GM12878 (cell line): ENCODE measurements at regions of chr4 and their contacts with region 1.

Region 1: DNA sequence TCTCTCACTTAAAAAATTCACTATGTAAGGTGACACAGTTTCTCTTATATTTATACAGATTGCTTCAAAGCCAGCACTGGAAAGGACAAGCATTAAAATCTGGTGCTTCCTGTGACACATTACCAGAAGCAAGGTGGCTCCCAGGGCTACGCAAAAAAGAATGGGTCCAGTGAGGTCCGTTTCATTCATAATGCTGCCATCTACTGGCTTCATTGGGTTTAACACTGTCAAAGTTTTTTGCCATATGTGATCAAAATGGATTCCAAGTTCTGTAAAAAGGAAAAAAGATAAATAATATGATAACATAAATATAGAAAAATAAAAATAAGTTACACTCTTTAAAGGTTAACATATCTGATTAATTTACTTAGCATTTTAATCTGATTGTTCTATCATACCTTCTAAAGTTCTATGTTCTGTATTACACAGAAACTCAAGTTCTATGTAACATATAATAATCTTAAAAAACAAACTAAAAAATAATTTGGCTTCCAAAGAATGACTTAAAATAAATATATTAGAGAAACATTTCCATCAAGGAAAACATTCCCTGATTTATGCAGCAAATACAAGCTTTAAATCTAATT is 22.1 kb downstream of the YIPF7 start:
- DNase-seq: peak; percentile 12
- ATAC-seq: peak; percentile 96
- H3K4me3 ChIP-seq: no peak overlapping the region
- H3K27ac ChIP-seq: no peak overlapping the region
- H3K4me1 ChIP-seq: no peaks in the 10 kb centered on the region
- H3K27me3 ChIP-seq: no peaks in the 10 kb centered on the region
- CTCF ChIP-seq: peak; percentile 56 to 75 (median 67); a peak in 5 of 6 replicates
- EP300 ChIP-seq: no peak
- POLR2A ChIP-seq: no peak
- RAD21 ChIP-seq: peak; percentile 73

Region 2: GRCh38 chr4:42995343-42995944 is 1633.9 kb before region 1 on chr4:
- CTCF ChIA-PET with region 1: interaction called, 4 read pairs
- POLR2A ChIA-PET with region 1: no interaction called
- RAD21 ChIA-PET with region 1: no interaction called
- SMC1A ChIA-PET with region 1: no interaction called
- in situ Hi-C with region 1: no loop called
- intact Hi-C with region 1: loop called (anchors 1 kb)
- DNase-seq: no peak
- ATAC-seq: peak; percentile 84
- H3K4me3 ChIP-seq: no peak overlapping the region
- H3K27ac ChIP-seq: no peak overlapping the region
- H3K4me1 ChIP-seq: no peaks in the 10 kb centered on the region
- H3K27me3 ChIP-seq: no peaks in the 10 kb centered on the region
- CTCF ChIP-seq: peak; percentile 68 to 73 (median 69)
- EP300 ChIP-seq: no peak
- POLR2A ChIP-seq: no peak
- RAD21 ChIP-seq: peak; percentile 81

Region 3: DNA sequence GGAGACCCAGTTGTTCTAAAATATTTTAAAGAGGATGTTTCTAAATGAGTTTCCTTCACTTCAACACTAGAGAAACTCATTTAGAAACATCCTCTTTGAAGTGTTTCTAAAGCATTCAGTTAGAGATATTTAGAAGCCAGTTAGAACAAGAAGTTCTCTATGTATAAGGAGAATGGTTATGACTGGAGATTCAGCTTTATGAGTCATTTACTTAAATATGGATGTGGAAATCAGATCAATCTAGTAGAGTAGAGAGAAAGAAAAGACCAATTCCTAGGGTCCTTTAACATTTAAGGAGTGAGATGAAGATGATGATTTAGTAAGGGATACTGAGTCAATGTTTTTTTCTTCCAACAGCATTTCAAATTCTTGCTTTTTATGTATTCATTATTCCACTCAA is 1502.8 kb before region 1 on chr4:
- CTCF ChIA-PET with region 1: interaction called, 5 read pairs
- POLR2A ChIA-PET with region 1: no interaction called
- RAD21 ChIA-PET with region 1: interaction called, 3 read pairs
- SMC1A ChIA-PET with region 1: interaction called, 3 read pairs
- in situ Hi-C with region 1: loop called (anchors 10 kb)
- intact Hi-C with region 1: loop called (anchors 5 kb)
- DNase-seq: no peak
- ATAC-seq: no peak
- H3K4me3 ChIP-seq: no peak overlapping the region
- H3K27ac ChIP-seq: no peak overlapping the region
- H3K4me1 ChIP-seq: no peaks in the 10 kb centered on the region
- H3K27me3 ChIP-seq: no peaks in the 10 kb centered on the region
- CTCF ChIP-seq: no peak
- EP300 ChIP-seq: no peak
- POLR2A ChIP-seq: no peak
- RAD21 ChIP-seq: no peak

Region 4: DNA sequence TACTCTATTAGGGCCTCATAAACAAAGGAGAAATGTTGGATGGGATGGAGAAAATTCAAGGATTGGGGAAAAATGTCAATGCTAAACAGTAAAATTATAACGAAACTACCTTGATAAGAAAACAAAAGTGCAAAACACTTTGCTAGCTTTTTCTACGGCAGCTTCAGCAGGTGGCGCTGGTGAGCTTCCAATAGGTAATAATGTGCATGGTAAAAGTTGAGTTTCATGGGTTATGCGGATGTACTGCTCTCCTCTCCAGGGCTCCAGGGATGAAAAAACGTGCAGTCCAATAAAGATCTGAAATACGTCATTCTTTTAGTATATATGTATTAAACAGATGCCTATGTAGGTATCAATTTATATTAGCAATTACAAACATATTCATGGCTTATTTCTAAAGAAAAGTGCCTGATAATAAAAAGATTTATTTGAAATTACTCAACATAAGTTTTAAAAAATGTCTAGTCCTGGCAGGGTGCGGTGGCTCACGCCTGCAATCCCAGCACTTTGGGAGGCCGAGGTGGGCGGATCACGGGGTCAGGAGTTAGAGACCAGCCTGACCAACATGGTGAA is 1497.3 kb before region 1 on chr4:
- CTCF ChIA-PET with region 1: interaction called, 5 read pairs
- POLR2A ChIA-PET with region 1: no interaction called
- RAD21 ChIA-PET with region 1: interaction called, 3 read pairs
- SMC1A ChIA-PET with region 1: interaction called, 3 read pairs
- in situ Hi-C with region 1: loop called (anchors 10 kb)
- intact Hi-C with region 1: loop called (anchors 5 kb)
- DNase-seq: peak; percentile 3
- ATAC-seq: peak; percentile 75
- H3K4me3 ChIP-seq: no peak overlapping the region
- H3K27ac ChIP-seq: no peak overlapping the region
- H3K4me1 ChIP-seq: no peaks in the 10 kb centered on the region
- H3K27me3 ChIP-seq: no peaks in the 10 kb centered on the region
- CTCF ChIP-seq: peak; percentile 80 to 93 (median 81); a peak in 5 of 6 replicates
- EP300 ChIP-seq: no peak
- POLR2A ChIP-seq: no peak
- RAD21 ChIP-seq: peak; percentile 90

Region 5: DNA sequence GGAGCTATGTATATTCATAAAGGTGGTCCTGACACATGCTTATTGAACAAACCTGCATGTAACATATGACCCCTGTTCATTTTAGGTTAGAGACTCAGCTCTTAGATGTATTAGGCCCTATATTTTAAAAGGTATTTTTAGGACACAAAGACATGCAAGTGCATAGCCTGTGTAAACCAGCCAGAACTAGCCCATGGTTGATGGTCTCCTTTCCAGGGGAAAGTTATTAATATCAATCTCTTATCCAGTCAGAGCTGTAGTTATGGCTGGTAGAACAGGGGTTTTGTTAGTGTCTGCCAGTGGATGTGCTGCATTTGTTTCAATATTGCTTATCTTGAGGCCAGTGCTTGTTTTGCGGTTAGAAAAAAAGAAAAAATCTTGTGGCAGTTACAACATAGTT is 669.4 kb before region 1 on chr4:
- CTCF ChIA-PET with region 1: no interaction called
- POLR2A ChIA-PET with region 1: no interaction called
- RAD21 ChIA-PET with region 1: no interaction called
- SMC1A ChIA-PET with region 1: no interaction called
- in situ Hi-C with region 1: no loop called
- intact Hi-C with region 1: no loop called
- DNase-seq: no peak
- ATAC-seq: no peak
- H3K4me3 ChIP-seq: no peak overlapping the region
- H3K27ac ChIP-seq: no peak overlapping the region
- H3K4me1 ChIP-seq: no peaks in the 10 kb centered on the region
- H3K27me3 ChIP-seq: no peaks in the 10 kb centered on the region
- CTCF ChIP-seq: no peak
- EP300 ChIP-seq: no peak
- POLR2A ChIP-seq: no peak
- RAD21 ChIP-seq: no peak

Region 6: GRCh38 chr4:44448548-44449461 is 180.6 kb before region 1 on chr4 and contains the start of gene KCTD8:
- CTCF ChIA-PET with region 1: interaction called, 3 read pairs
- POLR2A ChIA-PET with region 1: no interaction called
- RAD21 ChIA-PET with region 1: no interaction called
- SMC1A ChIA-PET with region 1: no interaction called
- in situ Hi-C with region 1: no loop called
- intact Hi-C with region 1: loop called (anchors 2 kb)
- DNase-seq: peak; percentile 1
- ATAC-seq: peak; percentile 99
- H3K4me3 ChIP-seq: peak within 1 kb of the TSS; percentile 38; the same call in 1 of the 2 replicates
- H3K27ac ChIP-seq: no peak within 1 kb of the TSS
- H3K4me1 ChIP-seq: no peaks in the 10 kb centered on the region
- H3K27me3 ChIP-seq: peaks cover 4 to 5% of the 10 kb centered on the region in 2 experiments; a peak in 3 of 4 replicates
- CTCF ChIP-seq: peak; percentile 66 to 75 (median 73)
- EP300 ChIP-seq: no peak
- POLR2A ChIP-seq: no peak
- RAD21 ChIP-seq: 0 out of 2 replicates have a peak, but pooled peaks have one; percentile 6
- polyA plus RNA-seq, gene KCTD8: 0.06 TPM in 1 of 2 experiments, not detected in the other